CD4-positive, alpha-beta memory T cell (primary cell): ENCODE measurements at regions of chr4 and their contacts with region 1.

Region 1: GRCh38 chr4:69717778-69718177 is 42.6 kb downstream of the SULT1B1 start:
- DNase-seq: no peak
- H3K4me3 ChIP-seq: no peak overlapping the region
- H3K4me3 Mint-ChIP-seq: no peak overlapping the region
- H3K27ac ChIP-seq: no peak overlapping the region
- H3K27ac Mint-ChIP-seq: no peak overlapping the region
- H3K4me1 ChIP-seq: no peaks in the 10 kb centered on the region
- H3K4me1 Mint-ChIP-seq: no peaks in the 10 kb centered on the region
- H3K27me3 ChIP-seq: no peaks in the 10 kb centered on the region
- H3K27me3 Mint-ChIP-seq: no peaks in the 10 kb centered on the region

Region 2: GRCh38 chr4:69697536-69698242 is 20.1 kb before region 1 on chr4:
- CTCF ChIA-PET with region 1: no interaction called
- POLR2A ChIA-PET with region 1: no interaction called
- intact Hi-C with region 1: loop called (anchors 1 kb)
- DNase-seq: no peak
- H3K4me3 ChIP-seq: no peak overlapping the region
- H3K4me3 Mint-ChIP-seq: no peak overlapping the region
- H3K27ac ChIP-seq: no peak overlapping the region
- H3K27ac Mint-ChIP-seq: no peak overlapping the region
- H3K4me1 ChIP-seq: no peaks in the 10 kb centered on the region
- H3K4me1 Mint-ChIP-seq: no peaks in the 10 kb centered on the region
- H3K27me3 ChIP-seq: no peaks in the 10 kb centered on the region
- H3K27me3 Mint-ChIP-seq: no peaks in the 10 kb centered on the region

Region 3: DNA sequence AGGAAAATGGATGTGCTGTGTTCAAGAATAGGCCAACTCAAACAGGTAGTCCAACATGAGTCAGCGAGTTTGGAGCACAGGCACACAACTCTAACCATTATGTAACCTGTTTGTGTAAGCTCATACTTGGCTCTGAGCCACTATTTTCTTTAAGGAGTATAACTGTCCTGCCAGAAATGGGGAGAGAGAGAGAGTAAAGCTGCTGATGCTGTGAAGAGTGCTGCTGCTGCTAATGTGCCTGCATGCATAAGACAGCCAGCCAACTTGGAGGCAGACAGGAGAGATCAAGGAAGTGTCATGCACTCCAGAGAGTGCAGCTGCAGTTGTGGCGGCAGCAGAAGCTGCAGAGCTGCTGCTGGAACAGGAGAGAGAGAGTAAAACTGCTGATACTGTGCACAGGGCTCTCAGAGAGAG is 266.3 kb after region 1 on chr4:
- CTCF ChIA-PET with region 1: no interaction called
- POLR2A ChIA-PET with region 1: no interaction called
- intact Hi-C with region 1: no loop called
- DNase-seq: no peak
- H3K4me3 ChIP-seq: no peak overlapping the region
- H3K4me3 Mint-ChIP-seq: no peak overlapping the region
- H3K27ac ChIP-seq: no peak overlapping the region
- H3K27ac Mint-ChIP-seq: no peak overlapping the region
- H3K4me1 ChIP-seq: no peaks in the 10 kb centered on the region
- H3K4me1 Mint-ChIP-seq: no peaks in the 10 kb centered on the region
- H3K27me3 ChIP-seq: no peaks in the 10 kb centered on the region
- H3K27me3 Mint-ChIP-seq: no peaks in the 10 kb centered on the region